Activated CD8-positive, alpha-beta T cell treated with anti-CD3 and anti-CD28 coated beads, Interleukin-2, amount 10 ng/mL, durations not matched to agents 7 days and 5 days (primary cell): ENCODE measurements at regions of chr17 and their contacts with region 1.

Region 1: DNA sequence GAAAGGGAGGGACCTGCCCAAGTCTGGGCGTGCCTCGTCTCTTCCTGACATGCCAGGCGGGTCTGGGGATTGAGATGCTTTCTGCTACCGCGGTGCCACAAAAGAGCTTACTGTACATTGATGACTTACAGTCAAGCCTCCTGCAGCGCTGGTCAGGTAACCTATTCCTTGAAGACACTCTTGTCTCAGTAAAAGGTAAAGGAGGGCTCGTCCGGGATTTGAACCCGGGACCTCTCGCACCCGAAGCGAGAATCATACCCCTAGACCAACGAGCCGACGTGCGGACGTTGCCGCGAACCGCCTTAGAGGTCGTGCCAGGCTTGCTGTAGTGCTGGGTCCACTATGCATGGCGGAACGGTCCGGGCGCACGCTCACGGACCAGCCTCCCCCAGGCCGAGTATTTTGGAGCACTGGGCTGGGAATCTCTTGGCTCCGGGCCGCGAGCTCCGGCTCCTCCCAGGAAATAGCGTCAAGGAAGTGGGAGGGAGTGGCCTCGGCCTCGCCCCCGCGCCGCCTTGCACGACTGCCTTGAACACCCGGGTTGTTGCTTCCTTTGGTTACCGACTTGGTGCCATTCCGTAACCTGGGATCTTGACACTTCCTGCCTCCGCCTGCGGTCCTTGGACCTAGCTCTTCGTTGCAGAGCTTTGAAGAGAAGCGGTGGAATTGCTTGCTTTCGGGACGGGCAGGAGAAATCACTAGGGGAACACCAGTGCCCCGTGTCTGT is 12.4 kb upstream of the AURKB start:
- DNase-seq: peak; percentile 92
- ATAC-seq: peak; percentile 49
- H3K4me3 Mint-ChIP-seq: peak overlapping the region; percentile 92
- H3K27ac Mint-ChIP-seq: peak overlapping the region; percentile 98
- H3K4me1 Mint-ChIP-seq: peaks cover 58% of the 10 kb centered on the region
- H3K27me3 Mint-ChIP-seq: peaks cover 2% of the 10 kb centered on the region

Region 2: GRCh38 chr17:8156246-8156992 is 66.4 kb before region 1 on chr17:
- CTCF ChIA-PET with region 1: interaction called, 3 read pairs
- POLR2A ChIA-PET with region 1: interaction called, 14 read pairs
- DNase-seq: peak; percentile 100
- ATAC-seq: peak; percentile 82
- H3K4me3 Mint-ChIP-seq: no peak overlapping the region
- H3K27ac Mint-ChIP-seq: no peak overlapping the region
- H3K4me1 Mint-ChIP-seq: peaks cover 36% of the 10 kb centered on the region
- H3K27me3 Mint-ChIP-seq: no peaks in the 10 kb centered on the region

Region 3: DNA sequence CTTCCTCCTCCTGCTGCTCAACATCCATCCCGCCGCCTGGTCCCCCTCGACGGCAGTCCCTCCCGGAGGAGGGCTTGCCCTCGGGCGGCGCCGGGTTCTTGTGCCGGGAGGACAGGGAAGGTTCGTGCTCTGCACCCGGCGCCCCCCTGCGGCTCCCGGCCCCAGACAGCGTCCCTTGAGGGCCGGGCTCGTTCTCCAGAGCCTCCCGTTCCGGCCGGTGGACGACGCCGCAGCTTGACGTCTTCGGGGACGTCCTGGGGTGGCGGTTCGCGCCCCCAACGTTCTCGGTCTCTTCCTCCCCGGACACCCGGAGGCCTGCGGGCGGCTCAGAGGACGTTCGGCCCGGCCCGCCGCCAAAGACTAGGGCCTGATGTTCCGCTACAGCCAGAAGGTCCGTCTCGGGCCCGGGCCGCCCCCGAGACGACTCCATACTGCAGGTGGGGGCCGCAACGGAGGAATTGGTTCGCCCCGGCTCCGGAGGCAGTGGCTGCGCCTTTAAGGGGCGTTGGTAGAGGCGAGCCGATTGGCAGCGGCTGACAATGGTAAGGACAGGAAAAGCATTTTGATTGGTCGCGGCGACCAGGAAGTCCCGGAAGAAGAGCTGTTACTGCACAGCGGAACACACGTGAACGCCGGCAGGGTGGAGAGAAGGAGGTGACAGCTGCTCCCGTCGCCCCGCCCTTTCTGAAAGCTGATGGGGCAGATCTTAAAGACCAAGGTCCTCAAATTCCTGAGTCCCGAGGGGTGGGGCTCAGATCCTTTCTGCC is 32.9 kb before region 1 on chr17 and contains the start of gene BORCS6:
- CTCF ChIA-PET with region 1: interaction called, 27 read pairs
- POLR2A ChIA-PET with region 1: interaction called, 59 read pairs
- DNase-seq: peak; percentile 98
- ATAC-seq: peak; percentile 68
- H3K4me3 Mint-ChIP-seq: no peak within 1 kb of the TSS
- H3K27ac Mint-ChIP-seq: peak within 1 kb of the TSS; percentile 93
- H3K4me1 Mint-ChIP-seq: peaks cover 11% of the 10 kb centered on the region
- H3K27me3 Mint-ChIP-seq: no peaks in the 10 kb centered on the region
- total RNA-seq, gene BORCS6: 12.7 TPM

Region 4: GRCh38 chr17:8209909-8210760 is 12.7 kb before region 1 on chr17 and contains the start of gene AURKB:
- CTCF ChIA-PET with region 1: interaction called, 14 read pairs
- POLR2A ChIA-PET with region 1: interaction called, 92 read pairs
- DNase-seq: peak; percentile 96
- ATAC-seq: peak; percentile 97
- H3K4me3 Mint-ChIP-seq: peak within 1 kb of the TSS; percentile 99
- H3K27ac Mint-ChIP-seq: peak within 1 kb of the TSS; percentile 99
- H3K4me1 Mint-ChIP-seq: peaks cover 41% of the 10 kb centered on the region
- H3K27me3 Mint-ChIP-seq: no peaks in the 10 kb centered on the region
- total RNA-seq, gene AURKB: 182 to 210 TPM

Region 5: DNA sequence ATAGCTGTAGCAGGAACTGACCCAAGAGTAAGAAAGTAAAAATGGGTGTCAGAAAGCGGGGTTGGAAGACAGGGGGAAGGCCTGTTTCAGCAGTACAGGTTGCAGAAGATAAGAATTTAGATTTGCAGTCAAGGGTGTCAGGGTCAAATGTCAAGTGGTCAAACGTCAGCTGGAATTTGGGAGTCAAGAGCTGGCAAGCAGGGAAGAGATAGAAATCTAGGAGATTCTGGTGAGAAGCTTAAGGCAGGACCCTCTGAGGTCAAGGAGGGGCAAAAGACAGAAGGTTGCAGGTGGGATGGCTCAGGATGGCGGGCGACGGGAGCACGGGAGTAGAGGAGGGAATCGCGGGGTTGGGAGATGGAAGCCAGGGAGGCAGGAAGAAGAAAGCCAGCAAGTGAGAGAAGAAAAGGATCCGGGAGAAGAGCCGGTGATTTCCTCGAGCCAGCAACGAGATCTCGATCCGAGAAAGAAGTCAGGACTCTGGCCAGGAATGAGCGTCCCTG is 72.1 kb after region 1 on chr17:
- CTCF ChIA-PET with region 1: interaction called, 27 read pairs
- POLR2A ChIA-PET with region 1: interaction called, 20 read pairs
- DNase-seq: no peak
- ATAC-seq: no peak
- H3K4me3 Mint-ChIP-seq: peak overlapping the region; percentile 84
- H3K27ac Mint-ChIP-seq: peak overlapping the region; percentile 90
- H3K4me1 Mint-ChIP-seq: peaks cover 48% of the 10 kb centered on the region
- H3K27me3 Mint-ChIP-seq: no peaks in the 10 kb centered on the region